ENCODE measurements at regions of chr4 and their contacts with region 1.

Region 1: DNA sequence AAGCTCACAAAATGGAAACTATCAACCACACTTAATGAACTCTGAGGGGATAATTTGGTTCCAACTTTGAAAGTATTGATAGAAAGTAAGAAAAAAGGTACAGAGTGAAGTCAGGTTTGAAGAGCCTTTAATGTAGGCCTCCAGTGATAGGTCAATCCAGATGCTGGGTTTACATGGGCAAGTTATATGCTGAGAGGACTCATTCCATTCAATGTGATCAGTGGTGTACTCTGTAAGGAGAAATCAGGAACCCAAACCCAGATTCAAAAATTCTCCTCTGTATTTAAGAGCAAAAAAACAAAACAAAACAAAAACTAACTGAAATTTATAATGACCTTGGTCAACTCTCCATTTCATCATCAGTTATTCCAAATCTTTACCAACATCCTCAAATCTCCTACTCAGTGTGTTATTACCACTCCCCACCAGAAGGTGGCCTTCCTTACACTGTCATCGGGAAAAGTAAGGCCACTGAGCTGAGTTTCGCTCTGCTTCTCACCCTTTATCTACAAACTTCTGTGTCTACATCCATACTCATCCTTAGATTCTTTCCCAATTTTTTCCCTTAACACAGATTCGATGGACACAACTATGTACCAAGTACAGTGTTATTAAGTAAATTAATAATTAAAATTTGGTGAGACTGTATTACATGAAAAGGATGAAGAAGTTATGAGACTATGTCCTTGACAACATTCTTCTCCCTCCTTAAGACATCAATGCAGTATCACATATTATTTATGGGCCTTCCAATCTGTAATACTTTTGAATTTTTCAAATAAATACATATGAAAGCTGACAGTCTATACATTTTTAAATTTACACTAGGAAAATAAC is 88.3 kb downstream of the ZAR1 start:
- DNase-seq: peak; percentile 51 to 65 (median 56)
- H3K4me3 ChIP-seq: no peak overlapping the region
- H3K4me3 Mint-ChIP-seq: no peak overlapping the region
- H3K27ac ChIP-seq: peak overlapping the region in 1 of 2 donors; percentile 48
- H3K27ac Mint-ChIP-seq: peak overlapping the region in 4 of 7 donors; percentile 33 to 88 (median 66)
- H3K4me1 ChIP-seq: no peaks in the 10 kb centered on the region
- H3K4me1 Mint-ChIP-seq: peaks cover 4% of the 10 kb centered on the region
- H3K27me3 ChIP-seq: no peaks in the 10 kb centered on the region
- H3K27me3 Mint-ChIP-seq: peaks cover 0 to 2% (median 0%) of the 10 kb centered on the region in 3 donors
- CTCF ChIP-seq: peak; percentile 92

Region 2: DNA sequence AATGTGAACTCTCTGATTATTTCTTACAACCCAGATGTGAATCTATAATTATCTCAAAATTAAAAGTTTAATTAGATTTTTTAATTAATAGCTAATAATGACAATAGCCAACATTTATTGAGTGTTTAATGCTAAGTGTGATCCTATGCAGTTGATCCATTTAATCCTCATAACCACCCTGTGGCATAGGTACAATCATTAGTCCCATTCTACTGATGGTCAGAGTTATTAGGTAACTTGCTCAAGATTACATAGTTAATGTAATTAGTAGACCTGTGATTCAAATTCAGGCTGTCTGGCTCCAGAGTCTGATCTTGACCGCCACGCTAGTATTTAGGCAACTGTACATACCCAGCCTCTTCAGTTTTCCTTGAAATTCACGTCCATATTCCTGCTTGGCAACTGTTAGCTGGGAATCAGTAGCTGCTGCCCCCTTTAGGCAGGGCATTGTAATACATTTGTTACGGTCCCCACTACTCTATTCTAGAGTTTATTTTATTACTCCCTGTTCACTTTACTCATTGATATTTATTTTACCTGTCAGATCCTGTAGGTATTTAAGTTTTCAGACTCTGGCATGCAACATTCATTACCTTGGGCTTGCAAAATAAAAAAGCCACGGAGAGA is 288.1 kb before region 1 on chr4:
- intact Hi-C with region 1: no loop called
- DNase-seq: peak in 2 of 3 donors; percentile 22 to 27
- H3K4me3 ChIP-seq: no peak overlapping the region
- H3K4me3 Mint-ChIP-seq: no peak overlapping the region
- H3K27ac ChIP-seq: no peak overlapping the region
- H3K27ac Mint-ChIP-seq: no peak overlapping the region
- H3K4me1 ChIP-seq: no peaks in the 10 kb centered on the region
- H3K4me1 Mint-ChIP-seq: no peaks in the 10 kb centered on the region
- H3K27me3 ChIP-seq: no peaks in the 10 kb centered on the region
- H3K27me3 Mint-ChIP-seq: peaks cover 0 to 2% (median 2%) of the 10 kb centered on the region in 3 donors
- CTCF ChIP-seq: peak; percentile 86

Region 3: GRCh38 chr4:48813964-48814363 is 235.6 kb after region 1 on chr4:
- intact Hi-C with region 1: no loop called
- DNase-seq: no peak
- H3K4me3 ChIP-seq: no peak overlapping the region
- H3K4me3 Mint-ChIP-seq: no peak overlapping the region
- H3K27ac ChIP-seq: no peak overlapping the region
- H3K27ac Mint-ChIP-seq: no peak overlapping the region
- H3K4me1 ChIP-seq: peaks cover 0 to 4% of the 10 kb centered on the region in 2 donors
- H3K4me1 Mint-ChIP-seq: peaks cover 14% of the 10 kb centered on the region
- H3K27me3 ChIP-seq: no peaks in the 10 kb centered on the region
- H3K27me3 Mint-ChIP-seq: peaks cover under 1 to 3% (median 2%) of the 10 kb centered on the region in 3 donors
- CTCF ChIP-seq: no peak

Region 4: GRCh38 chr4:48963042-48963679 is 384.8 kb after region 1 on chr4:
- intact Hi-C with region 1: loop called (anchors 2 to 5 kb)
- DNase-seq: peak; percentile 61 to 76 (median 73)
- H3K4me3 ChIP-seq: no peak overlapping the region
- H3K4me3 Mint-ChIP-seq: no peak overlapping the region
- H3K27ac ChIP-seq: no peak overlapping the region
- H3K27ac Mint-ChIP-seq: no peak overlapping the region
- H3K4me1 ChIP-seq: no peaks in the 10 kb centered on the region
- H3K4me1 Mint-ChIP-seq: no peaks in the 10 kb centered on the region
- H3K27me3 ChIP-seq: no peaks in the 10 kb centered on the region
- H3K27me3 Mint-ChIP-seq: peaks cover 2 to 6% (median 2%) of the 10 kb centered on the region in 3 donors
- CTCF ChIP-seq: peak; percentile 97

Measured in CD14-positive monocyte (primary cell).